IMR-90 (cell line): ENCODE measurements at regions of chr14 and their contacts with region 1.

Region 1: DNA sequence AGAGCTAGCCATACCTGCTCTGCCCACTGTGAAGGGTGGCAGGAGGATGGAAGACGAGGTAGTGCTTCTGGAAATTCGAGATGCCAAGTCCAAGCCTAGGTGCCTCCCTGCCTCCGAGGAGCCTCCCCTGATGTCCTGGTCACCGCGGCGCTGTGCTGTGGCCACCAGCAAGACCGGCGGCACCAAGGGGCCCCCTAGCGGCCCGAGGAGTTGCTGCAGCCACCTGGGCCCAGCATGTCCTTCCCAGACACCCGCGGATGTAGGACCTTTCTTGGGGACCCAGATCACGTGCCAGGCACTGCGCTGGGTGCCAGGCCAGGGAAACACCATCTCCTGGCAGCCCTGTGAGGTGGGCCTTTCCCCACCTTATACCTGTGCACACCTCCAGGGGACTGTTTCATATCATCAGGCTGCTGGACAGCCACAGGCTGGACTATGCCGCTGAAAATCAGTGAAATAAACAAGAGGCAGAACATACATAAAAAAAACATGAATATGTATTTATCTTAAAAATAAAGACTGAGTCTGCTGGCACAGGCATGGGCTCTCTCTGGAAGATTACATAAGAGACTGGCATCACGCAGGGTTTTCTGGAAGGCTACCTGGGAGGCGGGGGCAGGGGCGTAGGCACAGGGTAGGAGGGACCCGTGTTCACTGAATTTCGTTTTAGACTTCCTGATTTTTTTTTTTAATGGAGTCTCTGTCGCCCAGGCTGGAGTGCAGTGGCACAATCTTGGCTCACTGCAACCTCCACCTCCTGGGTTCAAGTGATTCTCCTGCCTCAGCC is 15.9 kb upstream of the HHIPL1 start:
- DNase-seq: peak; percentile 59
- ATAC-seq: peak; percentile 99
- H3K4me3 ChIP-seq: no peak overlapping the region
- H3K27ac ChIP-seq: no peak overlapping the region
- H3K4me1 ChIP-seq: peaks cover 8% of the 10 kb centered on the region
- H3K27me3 ChIP-seq: peaks cover 9% of the 10 kb centered on the region; the same call in 1 of the 2 replicates
- CTCF ChIP-seq: peak; percentile 95
- POLR2A ChIP-seq: peak; percentile 49; the same call in 1 of the 2 replicates
- RAD21 ChIP-seq: peak; percentile 97

Region 2: GRCh38 chr14:99393047-99393655 is 235.9 kb before region 1 on chr14:
- CTCF ChIA-PET with region 1: no interaction called
- POLR2A ChIA-PET with region 1: no interaction called
- dilution Hi-C with region 1: no loop called
- in situ Hi-C with region 1: no loop called
- intact Hi-C with region 1: loop called (anchors 5 kb)
- DNase-seq: peak; percentile 31
- ATAC-seq: peak; percentile 52; the same call in 1 of the 2 replicates
- H3K4me3 ChIP-seq: no peak overlapping the region
- H3K27ac ChIP-seq: no peak overlapping the region
- H3K4me1 ChIP-seq: peaks cover 2% of the 10 kb centered on the region; the same call in 1 of the 2 replicates
- H3K27me3 ChIP-seq: no peaks in the 10 kb centered on the region
- CTCF ChIP-seq: peak; percentile 57
- POLR2A ChIP-seq: no peak
- RAD21 ChIP-seq: peak; percentile 32

Region 3: GRCh38 chr14:99518441-99519346 is 110.3 kb before region 1 on chr14:
- CTCF ChIA-PET with region 1: interaction called, 4 read pairs
- POLR2A ChIA-PET with region 1: no interaction called
- dilution Hi-C with region 1: no loop called
- in situ Hi-C with region 1: loop called (anchors 5 kb)
- intact Hi-C with region 1: loop called (anchors 1 kb)
- DNase-seq: peak; percentile 32
- ATAC-seq: peak; percentile 51
- H3K4me3 ChIP-seq: no peak overlapping the region
- H3K27ac ChIP-seq: no peak overlapping the region
- H3K4me1 ChIP-seq: peaks cover 20% of the 10 kb centered on the region
- H3K27me3 ChIP-seq: no peaks in the 10 kb centered on the region
- CTCF ChIP-seq: peak; percentile 94
- POLR2A ChIP-seq: 0 out of 2 replicates have a peak, but pooled peaks have one; percentile 26
- RAD21 ChIP-seq: peak; percentile 93